GM12878 (cell line): ENCODE measurements at regions of chr3 and their contacts with region 1.

Region 1: GRCh38 chr3:182683453-182683852 is 109.9 kb upstream of the ATP11B start:
- DNase-seq: peak; percentile 36
- ATAC-seq: peak; percentile 72
- H3K4me3 ChIP-seq: no peak overlapping the region
- H3K27ac ChIP-seq: no peak overlapping the region
- H3K4me1 ChIP-seq: peaks cover 7% of the 10 kb centered on the region; the same call in 1 of the 2 replicates
- H3K27me3 ChIP-seq: no peaks in the 10 kb centered on the region
- CTCF ChIP-seq: peak; percentile 89 to 98 (median 93); a peak in 5 of 6 replicates
- EP300 ChIP-seq: no peak
- POLR2A ChIP-seq: no peak
- RAD21 ChIP-seq: peak; percentile 96

Region 2: GRCh38 chr3:181326637-181327223 is 1356.7 kb before region 1 on chr3:
- CTCF ChIA-PET with region 1: interaction called, 11 read pairs
- POLR2A ChIA-PET with region 1: no interaction called
- RAD21 ChIA-PET with region 1: no interaction called
- SMC1A ChIA-PET with region 1: interaction called, 8 read pairs
- in situ Hi-C with region 1: no loop called
- intact Hi-C with region 1: loop called (anchors 2 kb)
- DNase-seq: no peak
- ATAC-seq: peak; percentile 77
- H3K4me3 ChIP-seq: no peak overlapping the region
- H3K27ac ChIP-seq: no peak overlapping the region
- H3K4me1 ChIP-seq: no peaks in the 10 kb centered on the region
- H3K27me3 ChIP-seq: no peaks in the 10 kb centered on the region
- CTCF ChIP-seq: peak; percentile 59 to 65 (median 64)
- EP300 ChIP-seq: no peak
- POLR2A ChIP-seq: no peak
- RAD21 ChIP-seq: peak; percentile 72

Region 3: GRCh38 chr3:182248351-182248880 is 435.0 kb before region 1 on chr3:
- CTCF ChIA-PET with region 1: interaction called, 4 read pairs
- POLR2A ChIA-PET with region 1: no interaction called
- RAD21 ChIA-PET with region 1: no interaction called
- SMC1A ChIA-PET with region 1: interaction called, 8 read pairs
- in situ Hi-C with region 1: no loop called
- intact Hi-C with region 1: loop called (anchors 1 kb)
- DNase-seq: no peak
- ATAC-seq: peak; percentile 63
- H3K4me3 ChIP-seq: no peak overlapping the region
- H3K27ac ChIP-seq: no peak overlapping the region
- H3K4me1 ChIP-seq: no peaks in the 10 kb centered on the region
- H3K27me3 ChIP-seq: peaks cover 0 to 2% of the 10 kb centered on the region in 2 experiments; a peak in 2 of 4 replicates
- CTCF ChIP-seq: peak in 2 of 3 experiments; percentile 11 to 16; a peak in 1 of 6 replicates
- EP300 ChIP-seq: no peak
- POLR2A ChIP-seq: no peak
- RAD21 ChIP-seq: no peak

Region 4: DNA sequence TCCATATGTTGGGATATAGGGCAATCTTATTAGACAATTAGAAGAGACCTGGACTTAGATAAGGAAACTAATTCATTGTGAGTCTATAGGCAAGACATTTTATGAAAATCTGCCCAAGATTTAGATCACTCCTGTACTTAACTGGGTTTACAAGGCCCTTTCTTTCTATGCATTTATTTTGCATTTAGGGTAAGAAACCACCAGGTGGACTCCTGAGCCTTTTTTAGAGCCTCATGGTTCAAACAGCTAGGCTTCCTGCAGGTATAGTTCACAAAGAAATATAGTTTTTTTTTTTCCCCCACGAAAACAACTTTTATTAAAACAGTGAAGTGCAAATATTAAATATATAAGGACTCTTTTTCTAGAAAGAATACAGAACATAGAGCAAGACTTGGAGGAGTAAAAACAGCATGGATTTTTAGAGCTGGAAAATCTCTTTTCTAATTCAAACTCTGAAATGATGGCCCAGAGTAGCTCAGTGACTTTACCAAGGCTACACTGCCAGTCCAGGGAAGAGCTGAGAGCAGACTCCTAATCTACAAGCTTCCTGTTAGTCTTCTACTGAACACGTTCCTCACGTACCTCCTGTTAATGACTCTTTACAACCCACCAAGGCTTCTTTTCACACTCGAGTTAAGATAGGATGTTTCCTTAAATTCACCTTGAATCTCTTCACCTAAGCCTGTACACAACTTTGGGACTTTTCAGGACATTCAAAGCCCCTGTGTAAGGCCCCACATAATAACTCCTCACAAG is 291.1 kb before region 1 on chr3:
- CTCF ChIA-PET with region 1: interaction called, 7 read pairs
- POLR2A ChIA-PET with region 1: no interaction called
- RAD21 ChIA-PET with region 1: no interaction called
- SMC1A ChIA-PET with region 1: no interaction called
- in situ Hi-C with region 1: no loop called
- intact Hi-C with region 1: loop called (anchors 10 kb)
- DNase-seq: no peak
- ATAC-seq: no peak
- H3K4me3 ChIP-seq: no peak overlapping the region
- H3K27ac ChIP-seq: no peak overlapping the region
- H3K4me1 ChIP-seq: no peaks in the 10 kb centered on the region
- H3K27me3 ChIP-seq: peaks cover 0 to 2% of the 10 kb centered on the region in 2 experiments; a peak in 2 of 4 replicates
- CTCF ChIP-seq: peak in 1 of 3 experiments; percentile 7; a peak in 1 of 6 replicates
- EP300 ChIP-seq: no peak
- POLR2A ChIP-seq: no peak
- RAD21 ChIP-seq: peak; percentile 31; the same call in 1 of the 2 replicates

Region 5: GRCh38 chr3:182618085-182618732 is 65.2 kb before region 1 on chr3:
- CTCF ChIA-PET with region 1: interaction called, 17 read pairs
- POLR2A ChIA-PET with region 1: no interaction called
- RAD21 ChIA-PET with region 1: interaction called, 4 read pairs
- SMC1A ChIA-PET with region 1: interaction called, 7 read pairs
- in situ Hi-C with region 1: no loop called
- intact Hi-C with region 1: loop called (anchors 1 kb)
- DNase-seq: no peak
- ATAC-seq: peak; percentile 76
- H3K4me3 ChIP-seq: no peak overlapping the region
- H3K27ac ChIP-seq: no peak overlapping the region
- H3K4me1 ChIP-seq: no peaks in the 10 kb centered on the region
- H3K27me3 ChIP-seq: no peaks in the 10 kb centered on the region; a peak in 1 of 4 replicates
- CTCF ChIP-seq: peak; percentile 57 to 75 (median 65)
- EP300 ChIP-seq: no peak
- POLR2A ChIP-seq: no peak
- RAD21 ChIP-seq: peak; percentile 89

Region 6: DNA sequence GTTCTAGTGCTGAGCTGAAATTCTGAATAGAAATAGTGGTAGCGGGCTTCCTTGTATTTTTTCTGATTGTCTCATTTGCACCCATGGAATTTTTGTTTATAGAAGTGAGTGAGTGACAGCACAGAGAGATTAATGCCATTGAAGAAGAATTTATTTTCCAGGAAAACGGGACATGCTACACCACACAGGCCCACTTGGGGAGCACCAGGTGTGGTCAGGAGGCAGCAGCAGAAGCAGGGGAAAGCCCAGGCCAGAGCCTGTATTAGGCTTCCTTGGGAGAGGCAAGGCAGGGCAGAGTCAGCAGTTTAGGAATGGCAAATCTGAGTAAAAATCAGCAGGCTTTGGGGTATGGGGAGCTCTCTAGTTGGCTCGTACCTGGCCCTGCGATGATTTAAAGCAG is 21.5 kb after region 1 on chr3:
- CTCF ChIA-PET with region 1: interaction called, 6 read pairs
- POLR2A ChIA-PET with region 1: no interaction called
- RAD21 ChIA-PET with region 1: interaction called, 3 read pairs
- SMC1A ChIA-PET with region 1: interaction called, 15 read pairs
- in situ Hi-C with region 1: no loop called
- intact Hi-C with region 1: no loop called
- DNase-seq: no peak
- ATAC-seq: peak; percentile 46; the same call in 1 of the 3 replicates
- H3K4me3 ChIP-seq: no peak overlapping the region
- H3K27ac ChIP-seq: no peak overlapping the region
- H3K4me1 ChIP-seq: no peaks in the 10 kb centered on the region
- H3K27me3 ChIP-seq: no peaks in the 10 kb centered on the region
- CTCF ChIP-seq: no peak
- EP300 ChIP-seq: no peak
- POLR2A ChIP-seq: no peak
- RAD21 ChIP-seq: no peak

Region 7: DNA sequence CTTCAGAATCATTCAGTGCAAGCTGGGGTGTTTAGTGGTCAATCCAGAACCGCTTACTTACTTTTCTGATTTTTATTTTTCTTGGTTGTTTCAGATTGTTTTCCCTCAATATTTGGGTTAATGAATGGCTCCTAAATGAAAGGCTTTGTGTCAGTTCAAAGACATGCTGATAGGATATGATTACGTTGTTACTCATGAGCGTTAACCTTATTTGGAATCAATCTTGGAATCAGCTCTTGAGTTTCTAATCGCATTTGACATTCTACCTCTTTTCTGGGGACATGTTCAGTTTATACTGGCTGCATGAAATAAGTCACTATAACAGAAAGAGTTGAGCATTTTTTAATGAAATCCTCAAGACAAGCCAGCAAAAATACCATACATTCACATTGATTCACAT is 160.0 kb after region 1 on chr3:
- CTCF ChIA-PET with region 1: no interaction called
- POLR2A ChIA-PET with region 1: no interaction called
- RAD21 ChIA-PET with region 1: no interaction called
- SMC1A ChIA-PET with region 1: no interaction called
- in situ Hi-C with region 1: no loop called
- intact Hi-C with region 1: no loop called
- DNase-seq: no peak
- ATAC-seq: no peak
- H3K4me3 ChIP-seq: no peak overlapping the region
- H3K27ac ChIP-seq: no peak overlapping the region
- H3K4me1 ChIP-seq: no peaks in the 10 kb centered on the region
- H3K27me3 ChIP-seq: no peaks in the 10 kb centered on the region
- CTCF ChIP-seq: no peak
- EP300 ChIP-seq: no peak
- POLR2A ChIP-seq: no peak
- RAD21 ChIP-seq: no peak

Region 8: DNA sequence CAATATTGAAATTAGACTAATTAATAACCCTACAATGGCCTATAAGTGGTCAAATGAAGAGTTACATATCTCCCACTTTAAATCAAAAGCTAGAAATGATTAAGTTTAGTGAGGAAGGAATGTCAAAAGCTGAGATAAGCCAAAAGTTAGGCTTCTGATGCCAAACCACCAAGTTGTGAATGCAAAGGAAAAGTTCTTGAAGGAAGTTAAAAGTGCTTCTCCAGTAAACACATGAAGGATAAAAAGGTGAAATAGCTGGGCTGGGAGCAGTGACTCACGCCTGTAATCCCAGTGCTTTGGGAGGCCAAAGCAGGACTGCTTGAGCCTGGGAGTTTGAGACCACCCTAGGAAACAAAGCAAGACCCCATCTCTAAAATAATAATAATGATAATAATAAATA is 343.8 kb after region 1 on chr3:
- CTCF ChIA-PET with region 1: no interaction called
- POLR2A ChIA-PET with region 1: no interaction called
- RAD21 ChIA-PET with region 1: no interaction called
- SMC1A ChIA-PET with region 1: no interaction called
- in situ Hi-C with region 1: no loop called
- intact Hi-C with region 1: no loop called
- DNase-seq: no peak
- ATAC-seq: no peak
- H3K4me3 ChIP-seq: no peak overlapping the region
- H3K27ac ChIP-seq: no peak overlapping the region
- H3K4me1 ChIP-seq: no peaks in the 10 kb centered on the region
- H3K27me3 ChIP-seq: no peaks in the 10 kb centered on the region
- CTCF ChIP-seq: no peak
- EP300 ChIP-seq: no peak
- POLR2A ChIP-seq: no peak
- RAD21 ChIP-seq: no peak